Right lobe of liver (tissue), 6 donors: ENCODE measurements at regions of chr3 and their contacts with region 1.

Region 1: GRCh38 chr3:73107676-73108187 is 46.3 kb downstream of the EBLN2 start:
- DNase-seq: no peak
- ATAC-seq: no peak
- H3K4me3 ChIP-seq: no peak overlapping the region
- H3K27ac ChIP-seq: no peak overlapping the region
- H3K4me1 ChIP-seq: no peaks in the 10 kb centered on the region
- H3K27me3 ChIP-seq: no peaks in the 10 kb centered on the region
- CTCF ChIP-seq: no peak
- POLR2A ChIP-seq: no peak

Region 2: DNA sequence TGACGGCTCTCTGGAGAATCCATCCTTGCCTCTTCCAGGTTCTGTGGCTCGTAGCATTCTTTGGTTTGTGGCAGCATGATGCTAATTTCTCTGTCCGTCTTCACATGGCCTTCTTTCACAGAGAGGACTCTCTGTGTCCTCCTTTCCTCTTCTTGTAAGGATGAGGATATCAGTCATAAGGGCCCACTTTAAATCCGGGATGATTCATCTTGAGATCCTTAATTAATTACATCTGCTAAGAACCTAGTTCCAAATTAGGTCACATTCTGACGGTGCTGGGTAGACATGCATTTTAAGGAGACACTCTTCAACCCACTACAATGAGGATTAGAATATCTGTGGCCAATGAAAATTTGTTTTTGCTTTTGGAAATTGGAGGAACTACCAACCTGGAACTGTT is 235.5 kb before region 1 on chr3:
- intact Hi-C with region 1: no loop called
- DNase-seq: no peak
- ATAC-seq: no peak
- H3K4me3 ChIP-seq: no peak overlapping the region
- H3K27ac ChIP-seq: no peak overlapping the region
- H3K4me1 ChIP-seq: no peaks in the 10 kb centered on the region
- H3K27me3 ChIP-seq: no peaks in the 10 kb centered on the region
- CTCF ChIP-seq: no peak
- POLR2A ChIP-seq: no peak

Region 3: DNA sequence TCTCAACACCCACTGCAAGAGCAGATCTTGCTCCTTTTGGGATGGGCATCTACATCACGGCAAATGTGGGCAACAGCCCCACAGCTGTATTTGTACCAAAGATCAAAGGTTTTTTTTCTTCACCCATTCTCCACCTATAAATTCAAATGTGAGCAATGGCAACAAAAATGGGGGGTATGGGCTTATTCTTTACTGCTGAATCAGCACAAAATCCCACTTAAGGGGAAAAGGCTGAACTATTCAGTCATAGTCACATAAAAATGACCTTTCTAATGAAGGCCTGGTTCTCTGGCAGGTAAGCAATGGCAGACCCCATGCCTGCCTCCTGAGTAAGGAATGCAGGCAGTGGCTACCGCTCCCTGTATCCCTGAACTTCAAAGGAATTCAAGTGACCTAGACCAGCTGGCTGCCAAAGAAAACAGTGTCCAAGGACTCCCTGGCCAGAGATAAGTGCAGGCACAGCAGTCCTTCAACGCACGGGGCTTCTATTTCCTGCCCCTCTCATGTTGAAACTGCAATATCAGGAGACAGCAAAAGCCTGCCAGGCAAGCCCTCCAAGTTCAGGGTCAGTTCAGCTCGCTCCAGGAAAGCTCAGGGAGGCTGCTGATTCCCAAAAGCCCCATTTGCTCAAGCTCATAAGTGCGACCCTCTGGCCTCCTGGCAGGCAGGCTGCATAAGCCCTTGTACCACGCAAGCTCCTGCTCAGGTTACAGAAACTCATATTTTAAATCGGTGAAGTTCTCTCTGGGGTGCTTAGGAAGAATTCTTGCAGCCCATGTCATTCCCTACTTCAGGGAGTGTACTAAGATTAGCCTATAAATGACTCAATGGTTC is 382.9 kb after region 1 on chr3:
- intact Hi-C with region 1: loop called in 1 of 2 experiments (anchors 5 kb)
- DNase-seq: peak in 1 of 3 donors; percentile 49
- ATAC-seq: peak; percentile 50 to 66 (median 59)
- H3K4me3 ChIP-seq: no peak overlapping the region
- H3K27ac ChIP-seq: no peak overlapping the region
- H3K4me1 ChIP-seq: no peaks in the 10 kb centered on the region
- H3K27me3 ChIP-seq: no peaks in the 10 kb centered on the region
- CTCF ChIP-seq: no peak
- POLR2A ChIP-seq: no peak